Heart right ventricle (tissue), 16 donors: ENCODE measurements at regions of chr12 and their contacts with region 1.

Region 1: GRCh38 chr12:27243804-27244683 is at the start of gene STK38L:
- DNase-seq: peak; percentile 98
- ATAC-seq: peak; percentile 98 to 100 (median 98)
- H3K4me3 ChIP-seq: peak within 1 kb of the TSS; percentile 62 to 94 (median 81)
- H3K27ac ChIP-seq: peak within 1 kb of the TSS; percentile 73 to 95 (median 92)
- H3K4me1 ChIP-seq: peaks cover 0 to 39% (median 33%) of the 10 kb centered on the region in 9 donors
- H3K27me3 ChIP-seq: no peaks in the 10 kb centered on the region
- CTCF ChIP-seq: peak in 8 of 9 donors; percentile 8 to 49 (median 34)
- total RNA-seq, gene STK38L: 40.7 to 165 (median 104) TPM

Region 2: DNA sequence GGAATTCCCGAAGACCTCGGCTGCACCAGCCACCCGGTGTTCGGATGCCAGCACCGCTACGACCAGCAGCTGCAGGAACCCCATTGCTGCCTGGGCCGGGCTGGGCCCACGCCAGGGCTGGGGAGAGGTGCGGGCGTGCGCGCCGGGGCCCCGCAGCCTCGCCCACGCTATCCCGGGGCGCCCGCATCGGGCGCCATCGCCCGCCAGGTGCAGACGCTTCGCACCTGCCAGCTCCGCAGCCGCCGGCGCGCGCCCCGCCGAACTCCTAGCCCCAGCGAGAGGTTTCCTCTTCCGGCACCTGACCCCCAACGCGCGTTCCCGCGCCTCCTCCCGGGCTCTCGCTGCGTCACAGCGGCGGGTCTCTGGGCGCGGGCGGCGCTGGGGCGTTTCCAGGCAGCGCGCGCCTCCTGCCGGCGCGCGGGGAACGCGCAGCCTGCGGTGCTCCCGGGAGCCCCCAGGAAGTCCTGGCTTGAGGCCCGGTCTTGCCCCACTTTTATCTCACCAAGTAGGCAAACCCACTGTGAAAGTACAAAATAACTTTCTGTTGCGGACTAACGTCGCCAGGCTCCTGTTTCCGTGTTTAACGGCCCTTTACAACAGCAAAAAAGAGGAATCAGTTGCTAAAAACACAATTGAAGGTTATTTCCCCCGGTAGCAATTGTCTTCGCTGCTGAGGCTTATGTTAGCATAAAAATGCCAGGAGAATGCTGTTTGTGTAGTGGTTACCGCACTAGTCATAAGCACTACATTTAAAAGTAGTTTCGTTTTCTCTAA is 229.8 kb before region 1 on chr12 and contains the start of gene TM7SF3:
- intact Hi-C with region 1: loop called in 2 of 10 experiments (anchors 10 kb)
- DNase-seq: peak; percentile 94
- ATAC-seq: peak; percentile 93 to 99 (median 96)
- H3K4me3 ChIP-seq: peak within 1 kb of the TSS; percentile 60 to 98 (median 79)
- H3K27ac ChIP-seq: peak within 1 kb of the TSS; percentile 73 to 95 (median 92)
- H3K4me1 ChIP-seq: peaks cover 0 to 54% (median 39%) of the 10 kb centered on the region in 9 donors
- H3K27me3 ChIP-seq: no peaks in the 10 kb centered on the region
- CTCF ChIP-seq: peak; percentile 92 to 99 (median 98)
- total RNA-seq, gene TM7SF3: 16.3 to 29.3 (median 23.7) TPM

Region 3: GRCh38 chr12:27034607-27035293 is 209.3 kb before region 1 on chr12:
- intact Hi-C with region 1: loop called in 2 of 10 experiments (anchors 5 to 10 kb)
- DNase-seq: no peak
- ATAC-seq: no peak
- H3K4me3 ChIP-seq: no peak overlapping the region
- H3K27ac ChIP-seq: no peak overlapping the region
- H3K4me1 ChIP-seq: no peaks in the 10 kb centered on the region
- H3K27me3 ChIP-seq: no peaks in the 10 kb centered on the region
- CTCF ChIP-seq: no peak

Region 4: DNA sequence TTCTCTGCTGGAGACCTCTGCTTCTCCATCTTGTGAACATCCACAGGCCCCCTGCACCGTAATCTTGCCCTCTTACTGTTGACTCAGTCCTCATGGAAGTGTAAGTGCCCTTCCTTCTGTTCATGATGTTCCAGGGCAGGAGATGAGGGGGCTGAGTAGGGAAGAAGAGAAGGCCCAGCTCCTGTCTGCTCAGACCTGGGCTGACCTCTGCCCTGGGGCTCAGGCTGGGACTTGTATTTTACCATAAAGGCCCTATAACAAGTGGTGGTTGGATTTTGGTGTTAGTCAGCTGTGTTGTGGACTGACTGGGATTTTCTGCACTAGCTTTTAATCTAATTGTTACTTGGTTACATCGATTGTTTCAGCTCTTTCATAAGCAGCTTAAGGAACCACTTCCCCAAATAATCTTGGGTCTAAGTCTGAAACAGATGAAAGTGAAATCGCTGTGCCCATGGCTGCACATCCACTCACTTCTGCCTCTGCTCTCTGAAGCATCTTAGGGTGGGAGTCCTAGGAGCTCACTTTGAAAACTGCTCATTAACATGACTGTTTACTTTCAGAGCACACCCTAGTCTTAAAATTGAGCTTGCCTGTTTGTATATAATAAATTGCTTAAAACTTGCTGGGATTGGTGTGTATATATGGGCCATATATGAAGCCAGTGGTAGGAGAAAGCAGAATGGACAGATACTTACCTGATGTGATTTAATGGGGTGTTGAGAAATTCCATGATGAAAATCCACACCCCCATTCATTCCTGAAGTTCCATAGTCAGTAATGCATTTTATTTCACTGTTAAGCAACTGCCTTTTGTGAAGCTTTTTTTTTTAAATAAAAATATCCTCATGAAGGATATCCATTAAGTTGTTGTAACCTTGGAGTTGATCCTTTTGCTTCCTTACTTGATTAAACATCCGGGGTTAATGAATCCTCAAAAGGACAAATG is 179.4 kb before region 1 on chr12:
- intact Hi-C with region 1: no loop called
- DNase-seq: no peak
- ATAC-seq: no peak
- H3K4me3 ChIP-seq: no peak overlapping the region
- H3K27ac ChIP-seq: no peak overlapping the region
- H3K4me1 ChIP-seq: peaks cover 0 to 3% (median 0%) of the 10 kb centered on the region in 9 donors
- H3K27me3 ChIP-seq: no peaks in the 10 kb centered on the region
- CTCF ChIP-seq: no peak

Region 5: GRCh38 chr12:27161458-27162228 is 82.4 kb before region 1 on chr12:
- intact Hi-C with region 1: no loop called
- DNase-seq: no peak
- ATAC-seq: peak in 1 of 8 donors; percentile 58
- H3K4me3 ChIP-seq: no peak overlapping the region
- H3K27ac ChIP-seq: no peak overlapping the region
- H3K4me1 ChIP-seq: no peaks in the 10 kb centered on the region
- H3K27me3 ChIP-seq: no peaks in the 10 kb centered on the region
- CTCF ChIP-seq: no peak

Region 6: GRCh38 chr12:27185234-27186021 is 58.6 kb before region 1 on chr12:
- intact Hi-C with region 1: loop called in 3 of 10 experiments (anchors 5 kb)
- DNase-seq: no peak
- ATAC-seq: peak in 6 of 8 donors; percentile 30 to 67 (median 42)
- H3K4me3 ChIP-seq: no peak overlapping the region
- H3K27ac ChIP-seq: peak overlapping the region in 8 of 10 donors; percentile 8 to 67 (median 60)
- H3K4me1 ChIP-seq: peaks cover 9 to 45% (median 30%) of the 10 kb centered on the region in 9 donors
- H3K27me3 ChIP-seq: no peaks in the 10 kb centered on the region
- CTCF ChIP-seq: no peak

Region 7: DNA sequence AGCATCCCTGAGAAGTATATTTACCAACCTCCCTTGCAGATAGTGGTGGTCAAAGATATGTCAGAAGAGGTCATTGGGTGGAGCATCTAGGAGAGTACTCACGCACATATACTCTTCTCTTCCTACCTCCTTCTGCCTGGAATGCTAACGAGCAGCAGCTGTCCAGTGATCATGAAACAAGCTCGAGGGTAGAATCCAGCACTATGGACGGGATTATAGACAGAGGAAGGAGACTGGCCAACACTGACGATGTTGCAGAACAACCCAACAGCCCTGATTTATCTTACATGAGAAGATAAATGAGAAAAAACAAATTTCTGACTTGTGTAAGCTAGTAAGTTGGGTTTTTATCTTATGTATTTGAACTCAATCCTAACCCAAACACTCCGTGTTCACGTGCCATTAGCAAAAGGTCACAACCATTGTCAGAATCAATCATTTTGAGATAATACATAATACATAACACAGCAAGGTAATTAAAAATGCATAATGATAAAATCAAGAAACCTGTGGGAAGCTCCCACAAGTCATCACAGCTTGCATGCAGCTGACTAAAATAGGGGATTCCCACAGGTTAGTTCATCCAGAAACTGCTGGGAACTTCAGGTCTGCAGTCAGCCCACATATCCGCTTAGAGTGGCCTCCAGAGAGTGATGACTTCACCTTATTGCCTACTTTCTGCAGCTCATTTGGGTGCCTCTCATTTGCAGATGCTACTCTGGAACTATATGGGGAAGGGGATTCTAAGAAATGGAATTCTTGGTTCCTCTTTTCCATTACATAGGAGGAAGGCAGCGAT is 36.2 kb before region 1 on chr12:
- intact Hi-C with region 1: no loop called
- DNase-seq: no peak
- ATAC-seq: no peak
- H3K4me3 ChIP-seq: no peak overlapping the region
- H3K27ac ChIP-seq: no peak overlapping the region
- H3K4me1 ChIP-seq: no peaks in the 10 kb centered on the region
- H3K27me3 ChIP-seq: no peaks in the 10 kb centered on the region
- CTCF ChIP-seq: no peak

Region 8: GRCh38 chr12:27272701-27273028 is 28.6 kb after region 1 on chr12:
- intact Hi-C with region 1: loop called in 1 of 10 experiments (anchors 2 kb)
- DNase-seq: no peak
- ATAC-seq: peak in 5 of 8 donors; percentile 7 to 33 (median 14)
- H3K4me3 ChIP-seq: peak overlapping the region in 1 of 10 donors; percentile 1
- H3K27ac ChIP-seq: peak overlapping the region; percentile 18 to 83 (median 71)
- H3K4me1 ChIP-seq: peaks cover 16 to 76% (median 59%) of the 10 kb centered on the region in 9 donors
- H3K27me3 ChIP-seq: no peaks in the 10 kb centered on the region
- CTCF ChIP-seq: no peak

Region 9: GRCh38 chr12:27293463-27293862 is 49.4 kb after region 1 on chr12:
- intact Hi-C with region 1: loop called in 5 of 10 experiments (anchors 5 to 10 kb)
- DNase-seq: peak in 1 of 2 donors; percentile 42
- ATAC-seq: peak in 4 of 8 donors; percentile 30 to 71 (median 68)
- H3K4me3 ChIP-seq: no peak overlapping the region
- H3K27ac ChIP-seq: peak overlapping the region in 8 of 10 donors; percentile 11 to 87 (median 66)
- H3K4me1 ChIP-seq: peaks cover 0 to 100% (median 85%) of the 10 kb centered on the region in 9 donors
- H3K27me3 ChIP-seq: no peaks in the 10 kb centered on the region
- CTCF ChIP-seq: no peak